Activated CD8-positive, alpha-beta T cell treated with anti-CD3 and anti-CD28 coated beads for 36 hours (primary cell): ENCODE measurements at regions of chr6 and their contacts with region 1.

Region 1: GRCh38 chr6:131412960-131413830 is 159.8 kb upstream of the ARG1 start:
- DNase-seq: no peak
- ATAC-seq: no peak
- H3K4me3 Mint-ChIP-seq: no peak overlapping the region
- H3K27ac Mint-ChIP-seq: no peak overlapping the region
- H3K4me1 Mint-ChIP-seq: peaks cover 31% of the 10 kb centered on the region
- H3K27me3 Mint-ChIP-seq: no peaks in the 10 kb centered on the region
- CTCF ChIP-seq: no peak

Region 2: DNA sequence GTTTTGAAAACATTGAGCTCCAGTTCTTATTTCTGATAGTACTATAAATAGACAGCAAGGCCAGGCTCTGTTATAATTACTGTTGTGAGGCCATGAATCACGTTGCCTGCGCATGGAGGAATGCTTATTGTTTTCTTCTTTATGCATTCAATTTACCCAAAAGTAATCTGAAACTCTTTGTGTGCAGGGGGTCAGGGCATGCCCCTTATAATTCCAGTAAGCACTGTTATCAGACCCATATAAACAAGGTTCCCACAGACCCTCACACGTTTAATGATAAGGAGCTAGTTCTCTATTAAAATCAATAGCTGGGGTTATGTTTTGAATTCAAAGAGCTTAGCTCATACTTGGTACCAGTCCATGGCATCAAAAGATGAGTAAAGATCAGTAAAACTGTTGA is 15.0 kb before region 1 on chr6:
- CTCF ChIA-PET with region 1: interaction called, 11 read pairs
- POLR2A ChIA-PET with region 1: no interaction called
- intact Hi-C with region 1: no loop called
- DNase-seq: no peak
- ATAC-seq: no peak
- H3K4me3 Mint-ChIP-seq: no peak overlapping the region
- H3K27ac Mint-ChIP-seq: no peak overlapping the region
- H3K4me1 Mint-ChIP-seq: peaks cover 18% of the 10 kb centered on the region
- H3K27me3 Mint-ChIP-seq: no peaks in the 10 kb centered on the region
- CTCF ChIP-seq: no peak